ENCODE measurements at regions of chr1 and their contacts with region 1.

Region 1: DNA sequence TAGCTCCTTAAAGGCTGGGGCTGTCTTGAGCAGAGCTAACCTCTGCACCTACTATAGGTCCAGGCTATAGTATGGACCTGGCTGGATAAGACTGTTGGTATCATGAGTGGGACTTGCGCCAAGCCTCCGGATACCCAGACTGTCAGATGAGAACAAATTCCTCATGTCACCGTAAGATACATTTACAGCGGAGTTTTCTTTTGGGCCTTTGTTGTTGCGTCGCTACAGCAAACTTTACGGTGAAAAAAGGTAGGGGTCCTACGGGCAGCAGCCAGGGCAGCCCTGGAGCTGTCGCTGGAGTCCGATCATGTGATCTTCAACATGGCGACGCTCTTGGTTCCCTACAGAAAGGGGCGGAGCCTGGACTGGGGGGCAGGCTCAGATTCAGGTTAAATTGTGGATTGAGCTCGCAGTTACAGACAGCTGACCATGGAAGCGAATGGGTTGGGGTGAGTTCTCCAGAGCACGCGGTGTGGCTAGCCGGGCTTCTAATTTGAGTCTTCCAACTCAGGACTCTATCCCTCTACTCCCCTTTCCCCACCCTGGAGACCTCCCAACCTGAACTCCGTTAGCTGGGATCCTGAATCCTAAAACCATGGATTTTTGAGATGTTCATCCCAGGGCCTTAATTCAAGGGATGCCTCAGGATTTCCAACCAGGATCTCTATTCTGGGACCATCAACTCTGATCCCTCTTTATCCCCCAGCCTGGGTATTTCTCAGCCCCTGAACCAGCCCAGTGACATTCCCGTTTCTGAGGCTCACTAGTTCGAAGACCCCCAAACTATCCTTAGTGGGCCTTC is at the start of gene UROD:
- DNase-seq: peak; percentile 69
- ATAC-seq: peak; percentile 84
- H3K4me3 Mint-ChIP-seq: peak within 1 kb of the TSS; percentile 83
- H3K27ac Mint-ChIP-seq: peak within 1 kb of the TSS; percentile 81
- H3K4me1 Mint-ChIP-seq: peaks cover 43% of the 10 kb centered on the region
- H3K27me3 Mint-ChIP-seq: no peaks in the 10 kb centered on the region
- CTCF ChIP-seq: no peak
- total RNA-seq, gene UROD: 60.3 and 64.9 TPM in 2 replicates

Region 2: GRCh38 chr1:44775078-44775929 is 236.7 kb before region 1 on chr1 and contains the start of gene RPS8:
- CTCF ChIA-PET with region 1: no interaction called
- POLR2A ChIA-PET with region 1: interaction called, 33 read pairs
- intact Hi-C with region 1: no loop called
- DNase-seq: peak; percentile 84
- ATAC-seq: peak; percentile 82
- H3K4me3 Mint-ChIP-seq: peak within 1 kb of the TSS; percentile 98
- H3K27ac Mint-ChIP-seq: peak within 1 kb of the TSS; percentile 99
- H3K4me1 Mint-ChIP-seq: peaks cover 40% of the 10 kb centered on the region
- H3K27me3 Mint-ChIP-seq: no peaks in the 10 kb centered on the region
- CTCF ChIP-seq: no peak
- total RNA-seq, gene RPS8: 3,767 and 4,240 TPM in 2 replicates

Region 3: DNA sequence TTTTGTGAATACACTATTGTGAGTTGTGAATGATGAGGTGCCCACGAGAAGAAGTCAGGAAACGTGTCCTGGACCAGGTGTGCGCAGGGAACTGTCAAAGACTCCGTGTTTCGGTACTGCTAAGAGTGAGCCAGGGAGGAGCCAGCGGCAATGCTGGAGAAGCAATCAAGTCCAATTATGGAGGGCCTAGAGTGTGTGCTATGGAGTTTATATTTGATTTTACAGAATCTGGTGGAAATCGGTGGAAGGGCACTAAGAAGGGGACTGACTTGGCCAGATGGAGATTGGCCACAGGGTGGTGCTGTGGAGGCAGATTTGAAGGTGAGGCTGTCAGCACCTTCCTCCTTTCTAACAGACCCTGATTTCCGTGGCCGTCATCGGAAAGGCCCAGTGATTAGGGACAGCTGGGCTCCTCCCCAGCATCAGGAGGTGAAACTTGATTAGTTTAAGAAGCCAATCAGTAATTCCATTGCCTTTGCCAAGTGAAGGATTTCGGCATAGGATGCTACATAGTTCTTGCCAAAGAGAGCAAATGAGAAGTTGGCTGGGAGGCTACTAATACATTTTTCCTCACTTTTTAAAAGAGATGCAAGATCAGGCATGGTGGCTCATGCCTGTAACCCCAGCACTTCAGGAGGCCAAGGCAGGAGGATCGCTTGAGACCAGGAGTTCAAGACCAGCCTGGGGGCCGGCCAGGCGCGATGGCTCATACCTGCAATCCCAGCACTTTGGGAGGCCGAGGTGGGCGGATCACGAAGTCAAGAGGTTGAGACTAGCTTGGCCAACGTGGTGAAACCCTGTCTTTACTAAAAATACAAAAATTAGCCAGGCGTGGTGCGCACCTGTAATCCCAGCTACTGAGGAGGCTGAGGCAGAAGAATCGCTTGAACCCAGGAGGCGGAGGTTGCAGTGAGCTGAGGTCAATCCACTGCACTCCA is 176.0 kb before region 1 on chr1:
- CTCF ChIA-PET with region 1: interaction called, 3 read pairs
- POLR2A ChIA-PET with region 1: interaction called, 4 read pairs
- intact Hi-C with region 1: loop called (anchors 1 kb)
- DNase-seq: peak; percentile 75
- ATAC-seq: peak; percentile 99
- H3K4me3 Mint-ChIP-seq: no peak overlapping the region
- H3K27ac Mint-ChIP-seq: peak overlapping the region; percentile 47
- H3K4me1 Mint-ChIP-seq: peaks cover 13% of the 10 kb centered on the region
- H3K27me3 Mint-ChIP-seq: no peaks in the 10 kb centered on the region
- CTCF ChIP-seq: peak; percentile 71

Region 4: GRCh38 chr1:44926311-44926781 is 85.7 kb before region 1 on chr1:
- CTCF ChIA-PET with region 1: no interaction called
- POLR2A ChIA-PET with region 1: no interaction called
- intact Hi-C with region 1: no loop called
- DNase-seq: no peak
- ATAC-seq: no peak
- H3K4me3 Mint-ChIP-seq: no peak overlapping the region
- H3K27ac Mint-ChIP-seq: no peak overlapping the region
- H3K4me1 Mint-ChIP-seq: no peaks in the 10 kb centered on the region
- H3K27me3 Mint-ChIP-seq: no peaks in the 10 kb centered on the region
- CTCF ChIP-seq: no peak

Region 5: GRCh38 chr1:45059829-45060228 is 47.8 kb after region 1 on chr1:
- CTCF ChIA-PET with region 1: no interaction called
- POLR2A ChIA-PET with region 1: no interaction called
- intact Hi-C with region 1: no loop called
- DNase-seq: no peak
- ATAC-seq: no peak
- H3K4me3 Mint-ChIP-seq: no peak overlapping the region
- H3K27ac Mint-ChIP-seq: no peak overlapping the region
- H3K4me1 Mint-ChIP-seq: no peaks in the 10 kb centered on the region
- H3K27me3 Mint-ChIP-seq: peaks cover 2% of the 10 kb centered on the region
- CTCF ChIP-seq: no peak

Region 6: DNA sequence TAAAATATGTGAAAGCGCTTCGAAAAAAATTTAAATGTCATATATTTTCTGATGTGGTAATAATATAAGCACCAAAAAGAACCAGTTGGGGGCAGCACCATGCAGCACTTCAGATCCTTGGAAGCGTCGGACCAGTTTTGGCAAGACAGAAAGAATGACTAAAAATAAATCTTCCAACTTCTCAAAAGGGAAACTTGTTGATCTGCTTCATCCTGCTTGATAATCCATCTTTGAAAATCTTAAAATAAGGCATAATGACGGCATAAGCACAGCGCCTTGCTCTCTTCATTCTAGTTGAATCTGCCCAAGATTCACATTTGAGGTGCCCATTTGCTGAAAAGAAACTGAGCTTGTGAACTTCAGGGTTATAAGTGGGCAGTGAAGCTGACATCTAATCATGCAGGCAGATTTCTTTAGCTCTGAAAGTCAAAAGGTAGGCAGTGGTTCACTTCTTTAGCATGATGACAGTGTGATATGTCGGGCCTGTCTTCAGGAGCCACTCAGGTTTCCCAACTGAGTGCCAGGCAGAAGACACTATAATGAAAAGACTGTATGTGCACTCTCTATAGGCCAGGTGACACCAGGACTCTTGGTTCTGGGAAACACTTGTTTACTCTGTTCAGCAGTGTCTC is 348.0 kb after region 1 on chr1:
- CTCF ChIA-PET with region 1: interaction called, 8 read pairs
- POLR2A ChIA-PET with region 1: no interaction called
- intact Hi-C with region 1: loop called (anchors 1 kb)
- DNase-seq: no peak
- ATAC-seq: peak; percentile 73
- H3K4me3 Mint-ChIP-seq: peak overlapping the region; percentile 1
- H3K27ac Mint-ChIP-seq: peak overlapping the region; percentile 37
- H3K4me1 Mint-ChIP-seq: peaks cover 19% of the 10 kb centered on the region
- H3K27me3 Mint-ChIP-seq: no peaks in the 10 kb centered on the region
- CTCF ChIP-seq: no peak

Region 7: GRCh38 chr1:45569962-45570581 is 558.0 kb after region 1 on chr1:
- CTCF ChIA-PET with region 1: no interaction called
- POLR2A ChIA-PET with region 1: no interaction called
- intact Hi-C with region 1: loop called (anchors 1 kb)
- DNase-seq: peak; percentile 48
- ATAC-seq: peak; percentile 98
- H3K4me3 Mint-ChIP-seq: no peak overlapping the region
- H3K27ac Mint-ChIP-seq: no peak overlapping the region
- H3K4me1 Mint-ChIP-seq: no peaks in the 10 kb centered on the region
- H3K27me3 Mint-ChIP-seq: no peaks in the 10 kb centered on the region
- CTCF ChIP-seq: peak; percentile 17

Region 8: GRCh38 chr1:45884700-45885099 is 872.7 kb after region 1 on chr1:
- CTCF ChIA-PET with region 1: no interaction called
- POLR2A ChIA-PET with region 1: no interaction called
- intact Hi-C with region 1: loop called (anchors 5 kb)
- DNase-seq: no peak
- ATAC-seq: no peak
- H3K4me3 Mint-ChIP-seq: no peak overlapping the region
- H3K27ac Mint-ChIP-seq: no peak overlapping the region
- H3K4me1 Mint-ChIP-seq: peaks cover 6% of the 10 kb centered on the region
- H3K27me3 Mint-ChIP-seq: peaks cover 6% of the 10 kb centered on the region
- CTCF ChIP-seq: no peak

Measured in activated B cell treated with CpG ODN at 0.5 μM for 24 hours (primary cell).